ENCODE measurements at regions of chr1 and their contacts with region 1.

Region 1: GRCh38 chr1:248714248-248714647 is 11.7 kb upstream of the OR14I1 start:
- DNase-seq: no peak
- ATAC-seq: no peak
- H3K4me3 Mint-ChIP-seq: no peak overlapping the region
- H3K27ac Mint-ChIP-seq: no peak overlapping the region
- H3K4me1 Mint-ChIP-seq: no peaks in the 10 kb centered on the region
- H3K27me3 Mint-ChIP-seq: peaks cover 10% of the 10 kb centered on the region

Region 2: DNA sequence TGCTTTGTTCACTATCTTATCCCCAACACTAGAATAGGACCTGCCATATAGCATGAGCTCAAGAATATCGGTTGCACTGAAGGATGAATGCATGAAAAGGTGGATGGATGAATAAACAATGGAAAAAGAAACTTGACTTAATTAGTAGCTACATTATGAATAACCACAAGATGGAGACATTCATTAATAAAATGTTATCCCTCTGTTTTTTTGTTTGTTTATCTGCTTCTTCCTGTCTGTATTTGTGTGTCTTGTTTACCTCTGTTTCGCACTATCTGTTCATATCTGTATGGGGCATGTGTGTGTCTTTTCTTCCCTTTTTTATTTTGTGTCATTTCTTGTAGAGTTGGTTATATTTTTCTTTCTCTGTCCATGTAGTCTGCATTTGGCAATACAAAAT is 10.6 kb before region 1 on chr1:
- CTCF ChIA-PET with region 1: interaction called, 5 read pairs
- POLR2A ChIA-PET with region 1: no interaction called
- intact Hi-C with region 1: loop called (anchors 1 kb)
- DNase-seq: no peak
- ATAC-seq: no peak
- H3K4me3 Mint-ChIP-seq: no peak overlapping the region
- H3K27ac Mint-ChIP-seq: no peak overlapping the region
- H3K4me1 Mint-ChIP-seq: no peaks in the 10 kb centered on the region
- H3K27me3 Mint-ChIP-seq: peaks cover 2% of the 10 kb centered on the region